ENCODE measurements at regions of chr12 and their contacts with region 1.

Region 1: DNA sequence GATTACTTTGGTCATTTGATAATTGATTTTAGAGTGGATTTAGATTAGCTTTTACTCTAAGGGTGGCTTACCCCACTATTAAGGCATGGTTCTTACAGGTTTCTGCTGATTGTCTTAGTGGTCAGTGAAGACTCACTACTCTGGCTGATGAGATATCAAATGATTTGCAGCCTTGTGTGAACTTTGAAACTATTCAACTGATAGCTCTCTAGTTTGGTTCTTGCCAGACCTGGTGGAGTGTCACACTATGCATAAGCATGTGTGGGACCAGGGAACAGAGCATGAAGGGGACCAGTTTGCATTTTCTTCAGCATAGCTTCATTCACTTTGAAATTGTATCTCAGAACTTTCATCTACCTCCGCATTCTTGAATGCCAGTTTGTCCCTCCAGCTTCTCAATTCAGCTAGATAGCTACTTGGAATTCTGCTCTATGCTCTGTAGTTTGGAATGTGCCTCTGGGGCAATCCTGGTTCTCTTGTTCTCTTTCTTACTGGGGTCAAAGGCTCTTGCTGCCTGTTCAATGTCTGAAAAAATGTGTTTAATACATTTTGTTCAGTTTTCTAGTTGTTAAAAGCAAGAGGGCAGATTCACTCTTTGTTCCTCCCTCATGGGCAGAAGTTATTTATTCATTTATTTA is 12.7 kb downstream of the SCYL2 start:
- DNase-seq: no peak
- ATAC-seq: no peak
- H3K4me3 ChIP-seq: no peak overlapping the region
- H3K27ac ChIP-seq: no peak overlapping the region
- H3K4me1 ChIP-seq: no peaks in the 10 kb centered on the region
- H3K27me3 ChIP-seq: no peaks in the 10 kb centered on the region
- CTCF ChIP-seq: no peak

Region 2: DNA sequence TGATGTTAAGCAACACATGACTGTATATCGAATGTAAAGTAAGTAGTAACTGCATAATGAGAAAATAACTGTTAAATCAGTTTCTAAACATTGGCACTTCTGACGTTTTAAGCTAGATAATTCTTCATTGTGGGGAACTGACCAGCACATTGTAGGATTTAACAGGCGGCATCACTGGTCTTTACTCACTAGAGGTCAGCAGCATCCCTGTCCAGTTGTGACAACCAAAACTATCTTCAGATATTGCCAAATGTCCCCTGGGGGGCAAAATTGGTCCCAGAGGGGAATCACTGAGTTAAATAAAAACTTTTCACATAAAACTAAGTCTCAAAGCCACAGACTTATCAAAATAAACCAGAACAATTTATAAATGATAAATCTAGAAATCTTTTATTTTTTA is 202.4 kb before region 1 on chr12:
- CTCF ChIA-PET with region 1: no interaction called
- POLR2A ChIA-PET with region 1: interaction called, 13 read pairs
- intact Hi-C with region 1: no loop called
- DNase-seq: peak; percentile 10
- ATAC-seq: peak; percentile 72
- H3K4me3 ChIP-seq: no peak overlapping the region
- H3K27ac ChIP-seq: no peak overlapping the region
- H3K4me1 ChIP-seq: peaks cover 7% of the 10 kb centered on the region; the same call in 1 of the 2 replicates
- H3K27me3 ChIP-seq: no peaks in the 10 kb centered on the region
- CTCF ChIP-seq: peak; percentile 48